ENCODE measurements at regions of chr6 and their contacts with region 1.

Region 1: DNA sequence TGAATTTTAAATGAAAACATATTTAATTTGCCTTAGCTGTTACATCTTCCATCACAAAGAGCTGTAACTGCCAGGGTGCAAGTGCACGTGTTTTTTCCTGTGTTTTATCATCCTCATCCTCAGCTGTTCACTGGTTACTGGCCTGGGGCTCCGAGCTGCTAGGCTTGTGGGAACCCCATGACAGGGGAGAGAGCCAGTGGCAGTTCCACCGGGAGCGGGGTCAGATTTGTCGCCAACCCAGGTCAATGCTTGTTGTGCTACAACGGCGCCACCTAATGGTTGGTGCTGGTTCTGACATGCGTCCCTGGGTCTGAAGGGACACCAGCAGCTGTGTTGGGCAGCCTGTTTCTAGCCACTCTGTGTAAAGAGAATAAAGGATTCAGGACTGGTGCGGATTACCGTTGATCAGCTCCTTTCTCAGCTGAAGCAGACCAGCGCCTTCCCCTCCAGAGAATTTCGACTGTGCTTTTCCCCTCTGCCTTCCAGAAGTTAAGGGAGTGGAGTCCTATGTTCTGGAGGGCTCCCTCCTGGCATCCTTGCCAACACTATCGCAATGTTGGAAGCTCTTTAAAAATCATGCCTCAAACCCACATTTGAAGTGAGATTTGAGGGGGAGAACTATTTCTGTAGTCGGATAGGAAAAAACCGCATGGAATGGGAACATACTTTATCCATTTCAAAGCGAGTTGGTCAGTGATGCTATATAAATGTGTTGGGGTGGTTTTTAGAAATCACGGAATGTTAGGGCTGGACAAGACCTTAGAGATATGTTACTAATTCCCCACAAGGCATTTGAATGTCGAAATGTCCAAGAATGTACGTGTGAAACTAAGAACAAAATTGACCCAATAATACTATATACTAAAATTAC is 32.1 kb downstream of the SUMO4 start:
- DNase-seq: peak; percentile 92
- H3K4me3 Mint-ChIP-seq: no peak overlapping the region
- H3K27ac Mint-ChIP-seq: peak overlapping the region; percentile 78
- H3K4me1 Mint-ChIP-seq: peaks cover 14% of the 10 kb centered on the region
- H3K27me3 Mint-ChIP-seq: no peaks in the 10 kb centered on the region

Region 2: GRCh38 chr6:147741389-147741788 is 1690.8 kb before region 1 on chr6:
- CTCF ChIA-PET with region 1: no interaction called
- POLR2A ChIA-PET with region 1: no interaction called
- DNase-seq: no peak
- H3K4me3 Mint-ChIP-seq: no peak overlapping the region
- H3K27ac Mint-ChIP-seq: no peak overlapping the region
- H3K4me1 Mint-ChIP-seq: no peaks in the 10 kb centered on the region
- H3K27me3 Mint-ChIP-seq: no peaks in the 10 kb centered on the region

Region 3: DNA sequence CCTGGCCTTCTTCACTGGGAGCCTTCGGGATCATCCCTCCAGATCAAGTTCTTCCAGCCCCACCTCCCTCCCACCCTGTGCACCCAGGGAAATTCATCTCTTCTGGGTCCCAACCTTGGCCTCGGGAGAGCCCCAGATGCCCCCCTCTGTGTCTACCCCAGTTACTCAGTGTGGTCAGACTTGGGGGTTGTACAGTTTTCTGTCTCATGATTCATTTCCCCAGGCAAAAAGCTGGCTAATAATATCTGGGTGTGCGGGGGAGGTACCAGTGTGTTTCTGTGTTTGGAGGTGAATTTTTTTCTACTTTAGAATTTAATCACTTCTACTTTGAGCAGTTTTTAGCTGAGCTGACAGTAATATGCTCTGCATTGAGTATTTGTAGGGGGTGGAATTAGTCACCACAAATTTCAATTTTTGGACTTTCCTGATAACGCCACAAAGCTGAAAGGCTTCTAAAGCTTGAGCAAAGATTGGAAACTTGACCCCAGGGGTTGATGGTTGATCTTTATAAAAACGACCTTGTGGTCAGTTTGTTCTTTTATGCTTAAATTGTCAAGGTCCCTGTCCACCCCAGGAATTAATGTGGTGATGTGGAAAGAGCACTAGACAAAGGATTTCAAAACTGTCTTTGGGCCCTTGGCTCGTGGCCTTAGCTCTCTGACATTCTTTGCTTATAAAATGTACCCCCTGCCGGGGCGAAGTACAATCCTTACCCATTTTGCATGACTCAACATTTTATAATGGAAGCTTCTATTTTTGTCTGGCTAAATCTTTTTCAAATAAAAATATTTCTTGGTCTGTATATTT is 399.3 kb before region 1 on chr6:
- CTCF ChIA-PET with region 1: interaction called, 29 read pairs
- POLR2A ChIA-PET with region 1: no interaction called
- DNase-seq: peak; percentile 27
- H3K4me3 Mint-ChIP-seq: peak overlapping the region; percentile 64
- H3K27ac Mint-ChIP-seq: peak overlapping the region; percentile 92
- H3K4me1 Mint-ChIP-seq: peaks cover 69% of the 10 kb centered on the region
- H3K27me3 Mint-ChIP-seq: no peaks in the 10 kb centered on the region

Region 4: GRCh38 chr6:149065658-149066556 is 366.2 kb before region 1 on chr6:
- CTCF ChIA-PET with region 1: interaction called, 18 read pairs
- POLR2A ChIA-PET with region 1: no interaction called
- DNase-seq: peak; percentile 67
- H3K4me3 Mint-ChIP-seq: peak overlapping the region; percentile 14
- H3K27ac Mint-ChIP-seq: peak overlapping the region; percentile 94
- H3K4me1 Mint-ChIP-seq: peaks cover 46% of the 10 kb centered on the region
- H3K27me3 Mint-ChIP-seq: no peaks in the 10 kb centered on the region

Region 5: GRCh38 chr6:149354009-149354408 is 78.1 kb before region 1 on chr6:
- CTCF ChIA-PET with region 1: no interaction called
- POLR2A ChIA-PET with region 1: no interaction called
- DNase-seq: no peak
- H3K4me3 Mint-ChIP-seq: no peak overlapping the region
- H3K27ac Mint-ChIP-seq: no peak overlapping the region
- H3K4me1 Mint-ChIP-seq: peaks cover 69% of the 10 kb centered on the region
- H3K27me3 Mint-ChIP-seq: no peaks in the 10 kb centered on the region

Region 6: GRCh38 chr6:149419696-149420404 is 12.3 kb before region 1 on chr6:
- CTCF ChIA-PET with region 1: interaction called, 11 read pairs
- POLR2A ChIA-PET with region 1: no interaction called
- DNase-seq: no peak
- H3K4me3 Mint-ChIP-seq: no peak overlapping the region
- H3K27ac Mint-ChIP-seq: no peak overlapping the region
- H3K4me1 Mint-ChIP-seq: peaks cover 17% of the 10 kb centered on the region
- H3K27me3 Mint-ChIP-seq: no peaks in the 10 kb centered on the region

Region 7: GRCh38 chr6:149985481-149985937 is 553.4 kb after region 1 on chr6:
- CTCF ChIA-PET with region 1: no interaction called
- POLR2A ChIA-PET with region 1: no interaction called
- DNase-seq: no peak
- H3K4me3 Mint-ChIP-seq: no peak overlapping the region
- H3K27ac Mint-ChIP-seq: no peak overlapping the region
- H3K4me1 Mint-ChIP-seq: peaks cover 25% of the 10 kb centered on the region
- H3K27me3 Mint-ChIP-seq: peaks cover 86% of the 10 kb centered on the region

Measured in activated CD4-positive, alpha-beta T cell treated with anti-CD3 and anti-CD28 coated beads, Interleukin-2, amount 10 ng/mL, durations not matched to agents 7 days and 5 days (primary cell).